MCF 10A (cell line): ENCODE measurements at regions of chr20 and their contacts with region 1.

Region 1: DNA sequence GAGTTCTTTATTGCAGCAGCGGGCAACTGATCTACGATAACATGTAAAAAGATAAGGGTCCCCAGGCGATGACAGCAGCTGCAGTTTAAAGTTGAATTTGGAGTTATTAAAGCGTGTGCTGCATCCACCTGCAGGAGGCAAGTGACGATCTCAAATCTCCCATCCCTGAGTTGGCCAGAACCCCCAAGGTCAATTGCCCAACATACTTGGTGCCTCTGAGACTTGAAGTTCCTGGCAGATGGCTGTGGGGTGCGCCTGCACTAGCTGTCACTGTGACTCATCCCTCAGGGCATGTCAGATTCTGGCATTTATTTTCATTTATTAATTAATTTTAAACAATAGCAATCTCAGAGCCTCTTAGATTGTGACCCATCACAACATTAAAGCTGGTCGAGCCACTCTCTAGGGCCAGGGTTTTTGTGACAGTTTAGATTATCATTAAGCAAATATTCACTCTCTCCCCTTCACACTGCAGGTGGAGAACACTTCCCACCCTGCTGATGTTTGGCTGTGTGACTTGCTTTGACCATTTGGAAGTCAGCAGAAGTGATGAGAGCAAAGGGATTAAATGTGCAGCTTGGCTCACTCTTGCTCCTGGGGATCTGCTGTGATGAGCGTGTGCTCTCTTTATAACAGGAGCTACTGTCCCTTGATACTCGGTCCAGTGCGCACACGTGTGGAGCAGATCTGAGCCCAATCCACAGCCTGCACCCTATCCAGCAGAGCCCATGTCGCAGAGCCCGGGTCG is 290.6 kb upstream of the SULF2 start:
- DNase-seq: peak; percentile 58
- H3K4me3 Mint-ChIP-seq: no peak overlapping the region
- H3K27ac Mint-ChIP-seq: no peak overlapping the region
- H3K4me1 Mint-ChIP-seq: peaks cover 23% of the 10 kb centered on the region
- H3K27me3 Mint-ChIP-seq: no peaks in the 10 kb centered on the region
- CTCF ChIP-seq: no peak

Region 2: DNA sequence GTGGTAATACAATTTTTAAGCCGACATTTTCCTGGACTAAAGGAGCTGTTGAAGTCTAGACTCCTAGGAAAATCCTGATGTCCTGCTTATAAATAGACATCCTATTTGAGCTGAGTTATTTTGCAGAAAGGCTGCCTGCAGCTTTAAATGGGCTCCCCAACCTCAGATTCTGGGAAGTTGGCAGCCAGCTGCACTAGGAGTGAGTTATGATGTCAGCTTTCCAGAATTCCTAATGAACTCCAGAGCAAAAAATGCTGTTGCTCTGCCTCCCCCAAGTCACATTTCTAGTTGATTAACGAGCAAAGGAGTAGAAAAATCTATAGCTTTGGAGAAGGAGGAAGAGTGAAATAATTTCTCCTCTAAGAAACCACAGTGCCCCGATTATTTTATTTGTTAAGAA is 55.7 kb after region 1 on chr20:
- CTCF ChIA-PET with region 1: no interaction called
- POLR2A ChIA-PET with region 1: interaction called, 15 read pairs
- intact Hi-C with region 1: no loop called
- DNase-seq: no peak
- H3K4me3 Mint-ChIP-seq: no peak overlapping the region
- H3K27ac Mint-ChIP-seq: no peak overlapping the region
- H3K4me1 Mint-ChIP-seq: peaks cover 28% of the 10 kb centered on the region
- H3K27me3 Mint-ChIP-seq: peaks cover 3% of the 10 kb centered on the region
- CTCF ChIP-seq: no peak